ENCODE measurements at regions of chr15 and their contacts with region 1.

Region 1: DNA sequence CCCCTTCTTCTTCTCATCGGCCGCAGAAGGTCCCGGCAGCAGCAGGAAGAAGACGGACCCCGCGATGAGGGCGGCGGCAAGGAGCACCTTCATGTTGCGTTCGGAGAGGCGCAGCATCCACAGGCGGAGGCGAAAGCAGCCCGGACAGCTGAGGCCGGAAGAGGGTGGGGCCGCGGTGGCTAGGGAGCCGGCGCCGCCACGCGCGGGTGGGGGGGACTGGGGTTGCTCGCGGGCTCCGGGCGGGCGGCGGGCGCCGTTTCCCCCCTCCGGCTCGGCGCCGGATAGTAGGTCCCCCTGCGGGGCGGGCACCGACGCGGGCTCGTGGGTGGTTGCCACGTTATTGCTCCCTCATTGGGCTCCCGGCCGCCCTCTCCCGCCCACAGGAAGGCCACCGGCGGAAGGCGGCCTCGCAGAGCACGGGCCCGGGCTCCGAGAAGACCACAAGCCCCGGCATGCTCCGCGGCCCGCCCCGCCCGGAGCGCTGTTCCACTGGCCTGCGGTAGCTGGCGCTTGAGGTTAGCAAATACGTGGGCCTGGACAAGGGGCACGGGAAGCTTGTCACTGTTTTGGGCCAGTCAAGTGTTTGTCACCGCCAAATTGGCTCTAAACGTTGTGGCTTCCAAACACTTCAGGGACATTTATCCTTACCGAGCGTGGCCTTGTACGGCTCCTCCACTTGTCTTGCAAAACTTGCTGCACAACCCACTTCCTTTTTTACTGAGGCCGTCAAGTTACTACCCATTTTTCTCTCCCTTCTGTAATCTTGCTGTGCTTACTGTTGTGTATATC is at the start of gene PPIB:
- DNase-seq: peak; percentile 98
- H3K4me3 Mint-ChIP-seq: peak within 1 kb of the TSS; percentile 88
- H3K27ac Mint-ChIP-seq: peak within 1 kb of the TSS; percentile 94
- H3K4me1 Mint-ChIP-seq: peaks cover 43% of the 10 kb centered on the region
- H3K27me3 Mint-ChIP-seq: no peaks in the 10 kb centered on the region
- total RNA-seq, gene PPIB: 277 to 283 TPM

Region 2: DNA sequence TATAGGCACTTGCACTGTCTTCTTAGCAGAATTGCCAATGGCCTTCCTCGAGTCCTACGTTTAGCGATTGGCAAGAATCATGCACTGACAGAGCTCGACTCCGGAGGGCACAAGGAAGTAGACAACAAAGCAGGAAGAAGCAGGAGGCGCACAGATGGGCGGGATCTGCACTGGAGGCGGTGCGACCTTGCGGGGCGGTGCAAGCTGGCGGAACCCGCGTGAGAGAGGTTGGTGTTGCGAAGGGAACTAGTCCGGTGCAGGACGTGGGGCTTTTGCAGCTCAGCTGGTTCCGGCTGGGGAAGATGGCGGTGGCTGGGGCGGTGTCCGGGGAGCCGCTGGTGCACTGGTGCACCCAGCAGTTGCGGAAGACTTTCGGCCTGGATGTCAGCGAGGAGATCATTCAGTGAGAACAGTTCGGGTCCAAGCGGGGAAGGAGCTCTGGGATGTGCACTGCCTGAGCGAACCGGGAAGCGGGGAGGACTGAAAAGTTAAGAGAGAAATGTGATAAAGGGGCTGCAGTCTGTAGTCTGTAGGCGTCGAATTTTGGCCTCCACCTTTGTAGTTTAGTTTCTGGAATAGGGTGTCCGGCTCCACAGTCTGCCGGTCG is 224.6 kb after region 1 on chr15 and contains the start of gene TRIP4:
- CTCF ChIA-PET with region 1: interaction called, 3 read pairs
- POLR2A ChIA-PET with region 1: interaction called, 10 read pairs
- intact Hi-C with region 1: loop called (anchors 1 kb)
- DNase-seq: peak; percentile 98
- H3K4me3 Mint-ChIP-seq: peak within 1 kb of the TSS; percentile 97
- H3K27ac Mint-ChIP-seq: peak within 1 kb of the TSS; percentile 85
- H3K4me1 Mint-ChIP-seq: peaks cover 16% of the 10 kb centered on the region
- H3K27me3 Mint-ChIP-seq: no peaks in the 10 kb centered on the region
- total RNA-seq, gene TRIP4: 21.7 to 22.2 TPM

Measured in activated CD4-positive, alpha-beta memory T cell treated with anti-CD3 and anti-CD28 coated beads for 36 hours (primary cell).